Mammary epithelial cell (primary cell): ENCODE measurements at regions of chr12 and their contacts with region 1.

Region 1: GRCh38 chr12:65306366-65307168 is 28.1 kb downstream of the MSRB3 start:
- DNase-seq: peak; percentile 76
- H3K4me3 ChIP-seq: peak overlapping the region; percentile 20 to 33 (median 21)
- H3K27ac ChIP-seq: peak overlapping the region; percentile 90
- H3K4me1 ChIP-seq: peaks cover 29% of the 10 kb centered on the region
- H3K27me3 ChIP-seq: no peaks in the 10 kb centered on the region
- CTCF ChIP-seq: peak; percentile 83 to 84

Region 2: GRCh38 chr12:65685514-65685913 is 378.9 kb after region 1 on chr12:
- CTCF ChIA-PET with region 1: no interaction called
- dilution Hi-C with region 1: no loop called
- in situ Hi-C with region 1: loop called in 1 of 2 experiments (anchors 25 kb)
- intact Hi-C with region 1: no loop called
- DNase-seq: peak; percentile 48
- H3K4me3 ChIP-seq: no peak overlapping the region
- H3K27ac ChIP-seq: no peak overlapping the region
- H3K4me1 ChIP-seq: peaks cover 8% of the 10 kb centered on the region
- H3K27me3 ChIP-seq: no peaks in the 10 kb centered on the region
- CTCF ChIP-seq: peak; percentile 53 to 68

Region 3: DNA sequence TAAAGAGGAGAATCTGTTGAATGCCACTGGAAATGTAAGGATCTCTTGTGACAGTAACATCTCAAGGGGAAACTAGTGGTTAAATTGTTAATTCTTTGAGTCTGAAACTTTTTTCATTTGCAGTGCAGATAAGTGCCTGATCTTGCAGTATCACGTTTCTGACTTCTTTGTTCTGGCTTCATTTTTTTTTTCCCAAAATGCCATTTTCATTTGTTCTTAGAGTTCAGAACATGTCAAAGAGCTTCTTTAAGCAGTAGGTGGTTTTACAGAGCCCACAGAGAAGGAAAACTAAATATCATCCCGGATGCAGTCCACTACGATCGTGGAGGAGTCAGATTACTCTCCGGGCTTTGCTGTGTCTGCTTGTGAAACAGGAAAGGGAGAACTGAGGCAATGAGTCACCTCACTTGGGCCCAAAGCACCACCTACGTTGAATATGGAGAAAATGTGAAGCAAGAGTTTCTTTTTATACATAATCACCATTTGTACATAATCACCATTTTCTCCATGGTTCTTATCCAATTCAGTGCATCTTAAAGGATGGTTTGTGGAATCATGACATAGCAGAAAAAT is 561.7 kb after region 1 on chr12:
- CTCF ChIA-PET with region 1: no interaction called
- dilution Hi-C with region 1: no loop called
- in situ Hi-C with region 1: loop called in 1 of 2 experiments (anchors 25 kb)
- intact Hi-C with region 1: no loop called
- DNase-seq: peak; percentile 46
- H3K4me3 ChIP-seq: no peak overlapping the region
- H3K27ac ChIP-seq: peak overlapping the region; percentile 21
- H3K4me1 ChIP-seq: peaks cover 26% of the 10 kb centered on the region
- H3K27me3 ChIP-seq: no peaks in the 10 kb centered on the region
- CTCF ChIP-seq: no peak

Region 4: GRCh38 chr12:65999564-66000280 is 693.2 kb after region 1 on chr12:
- CTCF ChIA-PET with region 1: no interaction called
- dilution Hi-C with region 1: no loop called
- in situ Hi-C with region 1: loop called in 1 of 2 experiments (anchors 25 kb)
- intact Hi-C with region 1: no loop called
- DNase-seq: peak; percentile 91
- H3K4me3 ChIP-seq: no peak overlapping the region
- H3K27ac ChIP-seq: peak overlapping the region; percentile 58
- H3K4me1 ChIP-seq: peaks cover 53% of the 10 kb centered on the region
- H3K27me3 ChIP-seq: no peaks in the 10 kb centered on the region
- CTCF ChIP-seq: no peak

Region 5: GRCh38 chr12:66087365-66087943 is 780.9 kb after region 1 on chr12:
- CTCF ChIA-PET with region 1: no interaction called
- dilution Hi-C with region 1: no loop called
- in situ Hi-C with region 1: loop called (anchors 10 to 25 kb)
- intact Hi-C with region 1: loop called (anchors 5 kb)
- DNase-seq: peak; percentile 54
- H3K4me3 ChIP-seq: no peak overlapping the region
- H3K27ac ChIP-seq: no peak overlapping the region
- H3K4me1 ChIP-seq: no peaks in the 10 kb centered on the region
- H3K27me3 ChIP-seq: no peaks in the 10 kb centered on the region
- CTCF ChIP-seq: peak; percentile 88